ENCODE measurements at regions of chr14 and their contacts with region 1.

Region 1: GRCh38 chr14:55354500-55354899 is 57.1 kb downstream of the ATG14 start:
- DNase-seq: peak; percentile 63
- H3K4me3 ChIP-seq: no peak overlapping the region
- H3K27ac ChIP-seq: no peak overlapping the region; a peak in 1 of 4 replicates
- H3K4me1 ChIP-seq: no peaks in the 10 kb centered on the region; a peak in 1 of 4 replicates
- H3K27me3 ChIP-seq: no peaks in the 10 kb centered on the region
- CTCF ChIP-seq: peak; percentile 68
- EP300 ChIP-seq: no peak
- RAD21 ChIP-seq: peak; percentile 88

Region 2: DNA sequence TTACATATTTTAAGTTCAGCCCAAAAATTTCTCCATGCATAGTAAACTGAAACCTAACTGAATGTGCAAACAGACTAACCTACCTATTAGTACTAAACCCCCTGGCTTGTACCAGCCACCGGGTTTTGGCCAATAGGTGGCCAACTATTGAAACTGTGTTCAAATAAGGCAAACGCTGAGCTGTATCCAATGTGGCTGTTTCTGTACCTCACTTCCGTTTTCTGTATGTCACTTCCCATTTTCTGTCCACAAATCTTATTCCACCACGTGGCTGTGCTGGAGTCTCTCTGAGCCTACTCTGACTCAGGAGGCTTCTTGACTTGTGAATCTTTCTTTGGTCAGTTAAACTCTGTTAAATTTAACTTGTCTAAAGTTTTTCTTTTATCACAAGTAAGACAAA is 89.3 kb before region 1 on chr14:
- CTCF ChIA-PET with region 1: interaction called, 94 read pairs
- POLR2A ChIA-PET with region 1: no interaction called
- DNase-seq: no peak
- H3K4me3 ChIP-seq: no peak overlapping the region
- H3K27ac ChIP-seq: no peak overlapping the region
- H3K4me1 ChIP-seq: peaks cover 0 to 4% of the 10 kb centered on the region in 2 experiments; a peak in 1 of 4 replicates
- H3K27me3 ChIP-seq: no peaks in the 10 kb centered on the region
- CTCF ChIP-seq: no peak
- EP300 ChIP-seq: no peak
- RAD21 ChIP-seq: no peak

Region 3: GRCh38 chr14:55301437-55302121 is 52.9 kb before region 1 on chr14:
- CTCF ChIA-PET with region 1: interaction called, 11 read pairs
- POLR2A ChIA-PET with region 1: no interaction called
- DNase-seq: peak; percentile 31
- H3K4me3 ChIP-seq: no peak overlapping the region
- H3K27ac ChIP-seq: 0 out of 4 replicates have a peak overlapping the region, but pooled peaks of 1 of the 2 experiments have one; percentile 3
- H3K4me1 ChIP-seq: peaks cover 12 to 20% of the 10 kb centered on the region in 2 experiments; a peak in 3 of 4 replicates
- H3K27me3 ChIP-seq: no peaks in the 10 kb centered on the region
- CTCF ChIP-seq: no peak
- EP300 ChIP-seq: no peak
- RAD21 ChIP-seq: no peak

Region 4: GRCh38 chr14:55366271-55366670 is 11.8 kb after region 1 on chr14:
- CTCF ChIA-PET with region 1: interaction called, 15 read pairs
- POLR2A ChIA-PET with region 1: no interaction called
- DNase-seq: no peak
- H3K4me3 ChIP-seq: no peak overlapping the region
- H3K27ac ChIP-seq: peak overlapping the region; percentile 20 to 24; a peak in 3 of 4 replicates
- H3K4me1 ChIP-seq: no peaks in the 10 kb centered on the region; a peak in 1 of 4 replicates
- H3K27me3 ChIP-seq: no peaks in the 10 kb centered on the region
- CTCF ChIP-seq: no peak
- EP300 ChIP-seq: no peak
- RAD21 ChIP-seq: no peak

Region 5: DNA sequence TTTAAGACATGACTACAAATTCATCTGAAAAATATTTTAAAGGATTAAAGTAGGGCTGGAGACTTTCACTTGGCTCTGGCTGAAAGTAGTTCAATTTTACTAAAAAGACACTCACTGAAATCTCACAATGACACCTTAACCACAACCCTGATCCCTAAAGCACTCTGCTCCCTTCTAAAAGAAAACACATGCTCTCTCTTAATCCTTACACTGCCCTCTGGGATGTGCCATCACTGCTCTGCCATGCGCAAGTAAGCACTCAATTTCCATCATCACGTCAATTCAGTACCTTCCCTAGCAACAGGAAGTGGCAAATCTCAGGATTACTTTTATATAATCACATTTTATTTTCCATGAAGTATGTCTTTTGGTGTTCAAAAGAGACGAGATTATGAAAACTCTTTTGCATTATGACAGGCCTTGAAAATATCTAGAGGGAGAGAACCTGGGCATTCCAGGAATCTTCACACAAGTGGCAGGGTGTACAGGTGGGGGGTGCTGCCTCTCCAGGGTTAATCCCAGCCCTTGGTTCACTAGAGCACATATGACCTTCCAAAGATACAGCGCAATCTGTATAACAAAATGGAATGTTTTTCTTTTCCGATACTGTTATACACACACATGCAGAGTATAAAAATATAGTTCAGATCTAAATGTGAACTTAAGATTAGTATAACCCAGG is 49.8 kb after region 1 on chr14:
- CTCF ChIA-PET with region 1: no interaction called
- POLR2A ChIA-PET with region 1: no interaction called
- DNase-seq: no peak
- H3K4me3 ChIP-seq: no peak overlapping the region
- H3K27ac ChIP-seq: no peak overlapping the region
- H3K4me1 ChIP-seq: peaks cover 0 to 1% of the 10 kb centered on the region in 2 experiments; a peak in 1 of 4 replicates
- H3K27me3 ChIP-seq: no peaks in the 10 kb centered on the region
- CTCF ChIP-seq: no peak
- EP300 ChIP-seq: no peak
- RAD21 ChIP-seq: no peak

Region 6: DNA sequence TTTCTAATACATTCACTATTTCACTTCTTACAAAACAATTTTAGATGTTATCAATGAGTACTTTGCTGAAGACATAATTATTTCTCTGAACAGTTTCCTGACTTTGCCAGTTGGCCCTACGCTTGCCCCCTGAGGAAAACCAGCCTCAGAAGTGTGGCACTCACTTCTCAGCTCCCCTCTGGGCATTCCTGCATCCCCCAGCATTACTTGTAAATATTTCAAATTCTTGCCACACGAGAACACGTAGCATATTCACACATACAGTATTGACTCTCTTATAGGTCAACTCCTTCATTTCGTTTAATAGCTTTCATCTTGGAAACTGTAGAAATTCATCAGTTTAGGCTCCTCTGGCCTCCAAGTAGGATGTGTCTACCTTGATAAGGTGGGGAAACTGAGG is 1390.6 kb after region 1 on chr14:
- CTCF ChIA-PET with region 1: no interaction called
- POLR2A ChIA-PET with region 1: no interaction called
- DNase-seq: no peak
- H3K4me3 ChIP-seq: no peak overlapping the region
- H3K27ac ChIP-seq: no peak overlapping the region
- H3K4me1 ChIP-seq: no peaks in the 10 kb centered on the region
- H3K27me3 ChIP-seq: no peaks in the 10 kb centered on the region; the same call in 1 of the 2 replicates
- CTCF ChIP-seq: no peak
- EP300 ChIP-seq: no peak
- RAD21 ChIP-seq: no peak

Measured in SK-N-SH (cell line).